T-cell (primary cell): ENCODE measurements at regions of chr1 and their contacts with region 1.

Region 1: DNA sequence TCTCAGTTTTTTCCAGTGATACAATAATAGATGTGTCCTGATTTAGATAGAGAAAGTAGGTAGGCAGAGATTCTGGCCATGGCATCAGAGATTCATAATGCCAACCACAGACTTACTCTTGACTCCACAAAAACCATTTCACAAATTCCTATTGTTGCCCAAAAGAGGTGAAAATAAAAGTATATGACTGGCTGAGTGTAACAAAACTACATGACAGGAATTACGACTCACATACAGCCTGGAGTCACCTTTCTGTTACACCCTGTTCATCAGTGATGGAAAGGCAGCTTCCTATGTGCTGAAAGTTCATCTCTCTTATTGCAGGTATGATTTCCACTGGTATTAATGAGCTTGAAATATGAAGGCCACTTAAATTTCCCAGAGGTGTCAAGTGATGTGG is 72.3 kb downstream of the MPZL1 start:
- DNase-seq: no peak
- ATAC-seq: no peak
- H3K4me3 ChIP-seq: no peak overlapping the region
- H3K4me3 Mint-ChIP-seq: no peak overlapping the region
- H3K27ac ChIP-seq: no peak overlapping the region
- H3K27ac Mint-ChIP-seq: no peak overlapping the region
- H3K4me1 ChIP-seq: no peaks in the 10 kb centered on the region
- H3K4me1 Mint-ChIP-seq: peaks cover 0 to 6% (median 3%) of the 10 kb centered on the region in 3 donors
- H3K27me3 ChIP-seq: no peaks in the 10 kb centered on the region
- H3K27me3 Mint-ChIP-seq: no peaks in the 10 kb centered on the region

Region 2: DNA sequence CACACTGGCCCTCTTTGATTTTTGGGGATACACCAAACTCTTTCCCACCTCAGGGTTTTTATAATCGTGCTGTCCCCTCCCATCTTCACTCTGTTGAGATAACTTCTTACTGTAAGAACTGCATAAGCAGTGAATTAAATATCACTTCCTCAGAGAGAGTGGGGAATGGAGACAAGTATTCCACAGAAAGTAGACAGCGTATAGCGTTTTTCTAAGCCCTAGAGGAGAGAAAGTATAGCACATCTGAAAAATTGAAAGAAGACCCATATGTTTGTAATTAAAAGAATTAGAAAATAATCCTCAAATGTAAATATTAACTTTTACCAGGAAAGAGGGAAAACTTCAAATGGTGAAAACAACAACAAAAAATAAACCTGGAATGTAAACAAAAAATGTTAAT is 275.3 kb after region 1 on chr1:
- CTCF ChIA-PET with region 1: no interaction called
- POLR2A ChIA-PET with region 1: interaction called in 1 of 2 experiments, 20 read pairs
- DNase-seq: no peak
- ATAC-seq: no peak
- H3K4me3 ChIP-seq: no peak overlapping the region
- H3K4me3 Mint-ChIP-seq: no peak overlapping the region
- H3K27ac ChIP-seq: no peak overlapping the region
- H3K27ac Mint-ChIP-seq: no peak overlapping the region
- H3K4me1 ChIP-seq: no peaks in the 10 kb centered on the region
- H3K4me1 Mint-ChIP-seq: no peaks in the 10 kb centered on the region
- H3K27me3 ChIP-seq: no peaks in the 10 kb centered on the region
- H3K27me3 Mint-ChIP-seq: no peaks in the 10 kb centered on the region